ENCODE measurements at regions of chr13 and their contacts with region 1.

Region 1: DNA sequence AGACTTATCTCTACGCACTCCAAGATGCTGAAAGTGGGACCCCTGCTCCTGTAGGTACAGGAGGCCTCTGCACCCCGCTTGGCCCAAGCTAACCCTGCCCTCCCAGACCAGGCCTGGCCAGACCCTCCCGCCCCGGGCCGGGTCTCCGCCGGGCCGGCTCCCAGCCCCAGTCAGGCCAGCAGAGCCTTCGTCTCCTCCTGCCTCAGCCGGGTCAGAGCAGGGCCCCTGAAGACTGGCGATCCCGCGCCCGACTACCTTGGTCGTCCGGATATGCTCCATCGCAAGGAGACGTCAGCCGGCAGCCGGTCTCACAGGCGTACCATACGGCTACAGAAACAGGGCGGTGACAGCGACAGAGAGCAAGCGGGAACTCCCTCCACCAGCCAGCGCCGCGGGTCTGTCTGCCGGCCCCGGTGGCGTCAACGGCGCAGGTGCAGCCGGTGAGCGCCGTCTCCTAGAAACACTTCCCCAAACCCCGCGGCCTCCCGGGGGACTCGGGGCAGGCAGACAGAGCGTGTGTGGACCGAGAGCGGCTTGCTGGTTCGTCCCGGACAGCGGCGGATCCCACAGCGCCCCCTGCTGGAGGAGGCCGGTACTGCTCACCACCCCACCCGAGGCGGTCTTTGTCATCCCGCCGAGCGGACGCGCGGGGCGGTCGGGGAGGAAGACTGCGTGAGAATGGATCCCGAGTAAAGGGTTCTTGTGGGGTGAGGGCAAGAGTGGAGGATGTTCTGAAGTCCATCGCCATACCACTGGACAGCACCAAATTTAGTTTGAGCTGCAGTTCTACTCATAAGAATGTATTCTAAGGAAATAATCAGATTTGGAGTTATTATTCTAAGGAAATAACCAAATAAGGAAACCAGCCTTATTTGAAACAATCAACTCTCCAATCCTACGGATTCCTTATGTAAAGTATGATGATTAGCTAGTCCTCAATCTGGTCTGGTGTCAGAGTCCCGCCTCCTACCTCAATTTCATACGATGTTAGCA is at the start of gene MTMR6:
- DNase-seq: peak; percentile 94
- ATAC-seq: peak; percentile 89
- H3K4me3 Mint-ChIP-seq: peak within 1 kb of the TSS; percentile 92
- H3K27ac Mint-ChIP-seq: peak within 1 kb of the TSS; percentile 96
- H3K4me1 Mint-ChIP-seq: peaks cover 43% of the 10 kb centered on the region
- H3K27me3 Mint-ChIP-seq: peaks cover 19% of the 10 kb centered on the region
- total RNA-seq, gene MTMR6: 17.2 to 21.7 TPM

Region 2: DNA sequence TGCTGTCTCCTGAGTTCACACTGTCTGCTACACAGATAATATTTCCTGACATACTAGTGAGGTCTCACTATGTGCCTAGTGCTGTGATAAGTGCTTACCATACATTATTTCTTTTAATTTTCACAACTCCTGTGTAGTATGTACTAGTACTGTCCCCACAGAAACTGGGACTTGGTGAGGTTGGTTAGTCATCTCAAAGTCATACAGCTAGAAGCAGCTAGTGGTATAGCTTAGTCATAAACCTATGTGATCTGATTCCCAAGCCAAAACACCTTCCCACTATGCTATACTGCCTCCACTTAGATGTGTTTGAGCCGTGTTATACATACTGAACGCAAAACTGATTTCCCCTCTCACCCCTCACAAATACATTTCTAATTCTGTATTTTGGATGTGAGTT is 10.5 kb before region 1 on chr13:
- CTCF ChIA-PET with region 1: interaction called, 10 read pairs
- DNase-seq: no peak
- ATAC-seq: peak; percentile 77
- H3K4me3 Mint-ChIP-seq: no peak overlapping the region
- H3K27ac Mint-ChIP-seq: no peak overlapping the region
- H3K4me1 Mint-ChIP-seq: peaks cover 43% of the 10 kb centered on the region
- H3K27me3 Mint-ChIP-seq: no peaks in the 10 kb centered on the region

Region 3: DNA sequence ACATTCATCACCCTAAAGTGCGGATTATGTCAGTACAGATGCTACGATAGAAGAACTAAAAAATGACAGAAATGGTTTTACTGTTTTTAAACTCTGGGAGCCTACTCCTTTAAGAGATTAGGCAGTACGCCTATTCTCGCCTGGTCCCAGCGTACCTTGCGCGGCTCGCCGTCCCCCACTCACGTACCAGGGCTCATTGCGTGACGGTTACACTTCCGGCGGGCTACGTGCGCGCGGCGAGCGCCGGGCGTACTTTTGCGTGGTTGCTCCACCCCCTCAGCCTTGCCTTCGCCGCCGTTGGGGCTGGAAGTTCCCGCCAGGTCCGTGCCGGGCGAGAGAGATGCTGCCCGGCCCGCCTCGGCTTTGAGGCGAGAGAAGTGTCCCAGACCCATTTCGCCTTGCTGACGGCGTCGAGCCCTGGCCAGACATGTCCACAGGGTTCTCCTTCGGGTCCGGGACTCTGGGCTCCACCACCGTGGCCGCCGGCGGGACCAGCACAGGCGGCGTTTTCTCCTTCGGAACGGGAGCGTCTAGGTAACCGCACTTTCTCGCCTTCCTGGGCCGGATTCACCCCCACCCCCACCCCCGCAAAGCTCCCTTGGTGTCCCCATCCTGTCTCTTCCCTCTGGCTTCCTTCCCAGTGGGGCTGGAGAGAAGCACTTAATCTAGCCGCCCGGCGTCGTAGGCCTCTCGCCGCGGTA is 14.2 kb after region 1 on chr13 and contains the start of gene NUP58:
- CTCF ChIA-PET with region 1: interaction called, 35 read pairs
- DNase-seq: peak; percentile 96
- ATAC-seq: peak; percentile 98
- H3K4me3 Mint-ChIP-seq: peak within 1 kb of the TSS; percentile 93
- H3K27ac Mint-ChIP-seq: peak within 1 kb of the TSS; percentile 96
- H3K4me1 Mint-ChIP-seq: peaks cover 46% of the 10 kb centered on the region
- H3K27me3 Mint-ChIP-seq: peaks cover 22% of the 10 kb centered on the region
- total RNA-seq, gene NUP58: 82.4 to 94.3 TPM